Activated B cell treated with CpG ODN at 0.5 μM for 24 hours (primary cell): ENCODE measurements at regions of chr15 and their contacts with region 1.

Region 1: DNA sequence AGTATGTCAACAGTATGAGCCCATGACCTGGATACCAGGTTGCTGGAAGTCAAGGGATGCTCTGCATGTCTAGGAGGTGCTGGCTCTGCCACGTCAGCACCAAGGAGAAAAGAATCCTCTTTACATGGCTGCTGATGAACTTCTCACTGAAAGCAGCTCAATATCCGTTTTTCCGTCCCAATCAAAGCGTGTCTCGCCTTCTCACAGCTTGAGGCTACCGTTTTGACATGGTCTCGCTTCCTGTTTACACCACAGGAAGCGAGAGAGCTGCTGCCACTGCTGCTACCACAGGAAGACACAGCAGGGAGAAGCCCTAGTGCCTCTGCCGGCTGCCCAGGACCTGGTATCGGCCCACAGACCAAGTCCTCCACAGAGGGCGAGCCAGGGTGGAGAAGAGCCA is 27.3 kb downstream of the STARD5 start:
- DNase-seq: peak; percentile 56
- ATAC-seq: peak; percentile 32
- H3K4me3 Mint-ChIP-seq: peak overlapping the region; percentile 99
- H3K27ac Mint-ChIP-seq: peak overlapping the region; percentile 99
- H3K4me1 Mint-ChIP-seq: peaks cover 98% of the 10 kb centered on the region
- H3K27me3 Mint-ChIP-seq: no peaks in the 10 kb centered on the region
- CTCF ChIP-seq: no peak

Region 2: GRCh38 chr15:80953936-80954778 is 342.5 kb before region 1 on chr15:
- CTCF ChIA-PET with region 1: no interaction called
- POLR2A ChIA-PET with region 1: no interaction called
- intact Hi-C with region 1: no loop called
- DNase-seq: no peak
- ATAC-seq: no peak
- H3K4me3 Mint-ChIP-seq: no peak overlapping the region
- H3K27ac Mint-ChIP-seq: no peak overlapping the region
- H3K4me1 Mint-ChIP-seq: no peaks in the 10 kb centered on the region
- H3K27me3 Mint-ChIP-seq: no peaks in the 10 kb centered on the region
- CTCF ChIP-seq: no peak

Region 3: DNA sequence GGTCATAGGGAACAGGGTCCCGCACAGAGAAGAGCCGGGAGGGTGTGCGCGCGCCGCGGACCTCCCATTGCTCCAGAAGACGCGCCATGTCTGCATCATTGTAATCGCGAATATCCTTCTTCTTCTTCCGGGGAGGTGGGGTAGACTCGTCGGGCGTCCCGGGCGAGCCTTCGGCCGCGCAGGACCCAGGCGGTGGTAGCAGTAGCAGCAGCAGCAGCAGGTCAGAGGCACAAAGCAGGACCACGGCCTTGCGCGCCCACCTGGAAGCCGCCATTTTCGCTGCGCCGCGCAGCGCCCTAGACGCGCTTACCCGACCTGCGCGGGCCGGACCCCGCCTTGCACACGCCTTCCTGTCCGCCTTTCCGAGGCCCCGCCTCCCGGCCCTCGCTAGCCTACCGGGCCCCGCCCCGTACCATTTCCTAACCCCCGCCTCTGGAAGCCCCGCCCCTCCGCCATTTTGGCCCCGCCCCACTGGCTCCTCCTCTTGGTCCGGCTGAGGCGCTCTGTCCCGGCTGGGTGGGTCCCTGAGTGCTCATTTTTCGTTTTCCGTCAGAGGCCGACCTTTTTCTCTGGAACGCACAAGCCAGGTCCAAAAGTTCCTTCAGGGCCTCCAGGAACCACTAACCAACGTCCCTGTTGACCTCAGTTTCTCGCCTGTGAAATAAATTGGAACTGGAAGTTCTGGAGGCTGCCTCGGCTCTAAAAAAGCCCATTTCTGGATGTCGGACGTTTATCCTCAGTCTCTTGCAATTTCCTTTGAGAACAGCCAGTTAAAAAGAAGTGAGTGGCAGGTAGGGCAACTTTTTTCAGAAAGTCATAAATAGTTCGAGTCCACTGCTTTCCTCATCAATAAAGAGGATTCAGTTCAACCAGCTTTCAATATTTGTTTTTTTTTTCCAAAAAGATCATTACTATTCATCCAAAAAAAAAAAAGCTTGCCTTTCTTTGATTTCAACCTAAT is 306.9 kb before region 1 on chr15 and contains the start of gene MESD:
- CTCF ChIA-PET with region 1: no interaction called
- POLR2A ChIA-PET with region 1: interaction called, 4 read pairs
- intact Hi-C with region 1: loop called (anchors 5 kb)
- DNase-seq: peak; percentile 90
- ATAC-seq: peak; percentile 99
- H3K4me3 Mint-ChIP-seq: peak within 1 kb of the TSS; percentile 99
- H3K27ac Mint-ChIP-seq: peak within 1 kb of the TSS; percentile 99
- H3K4me1 Mint-ChIP-seq: peaks cover 54% of the 10 kb centered on the region
- H3K27me3 Mint-ChIP-seq: no peaks in the 10 kb centered on the region
- CTCF ChIP-seq: no peak
- total RNA-seq, gene MESD: 21.4 and 23.8 TPM in 2 replicates

Region 4: DNA sequence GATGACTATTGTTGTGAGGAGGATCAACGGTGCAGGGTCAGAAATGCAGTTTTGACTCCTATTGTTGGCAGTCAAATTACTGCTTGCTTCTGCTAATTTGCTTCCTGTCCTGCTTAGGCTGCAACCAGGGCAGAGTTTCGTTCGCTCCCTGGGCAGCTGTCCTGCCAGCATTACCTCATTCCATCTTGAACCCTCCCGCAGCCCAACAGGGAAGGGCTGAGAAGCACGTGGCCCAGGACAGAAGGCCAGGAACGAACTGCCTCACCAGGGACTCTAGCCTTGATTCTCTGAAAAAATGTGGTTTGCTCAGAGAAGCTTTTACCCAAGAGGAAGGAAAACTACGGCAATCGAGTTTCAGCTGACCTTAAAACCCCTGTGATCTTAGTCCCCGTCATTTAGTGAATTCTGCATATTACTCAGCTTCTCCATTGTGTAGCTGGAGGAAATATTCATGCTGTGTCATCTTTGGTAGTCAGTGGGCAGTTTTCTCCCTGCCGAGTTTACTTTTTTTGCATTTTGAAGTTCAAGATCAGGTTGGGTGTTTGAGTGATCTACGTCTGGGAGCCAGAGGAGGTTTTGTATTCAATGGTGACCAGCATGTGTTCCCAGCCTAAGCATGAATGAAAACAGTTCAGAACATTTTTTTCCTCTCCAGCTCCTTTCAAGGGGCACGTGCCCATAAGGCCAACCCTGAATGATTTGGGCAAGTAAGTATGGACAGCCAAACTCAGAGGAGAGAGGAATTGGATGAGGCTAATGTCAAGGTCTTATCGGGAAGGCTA is 273.0 kb before region 1 on chr15:
- CTCF ChIA-PET with region 1: no interaction called
- POLR2A ChIA-PET with region 1: interaction called, 4 read pairs
- intact Hi-C with region 1: loop called (anchors 1 kb)
- DNase-seq: peak; percentile 35
- ATAC-seq: peak; percentile 82
- H3K4me3 Mint-ChIP-seq: peak overlapping the region; percentile 78
- H3K27ac Mint-ChIP-seq: peak overlapping the region; percentile 91
- H3K4me1 Mint-ChIP-seq: peaks cover 18% of the 10 kb centered on the region
- H3K27me3 Mint-ChIP-seq: no peaks in the 10 kb centered on the region
- CTCF ChIP-seq: no peak

Region 5: DNA sequence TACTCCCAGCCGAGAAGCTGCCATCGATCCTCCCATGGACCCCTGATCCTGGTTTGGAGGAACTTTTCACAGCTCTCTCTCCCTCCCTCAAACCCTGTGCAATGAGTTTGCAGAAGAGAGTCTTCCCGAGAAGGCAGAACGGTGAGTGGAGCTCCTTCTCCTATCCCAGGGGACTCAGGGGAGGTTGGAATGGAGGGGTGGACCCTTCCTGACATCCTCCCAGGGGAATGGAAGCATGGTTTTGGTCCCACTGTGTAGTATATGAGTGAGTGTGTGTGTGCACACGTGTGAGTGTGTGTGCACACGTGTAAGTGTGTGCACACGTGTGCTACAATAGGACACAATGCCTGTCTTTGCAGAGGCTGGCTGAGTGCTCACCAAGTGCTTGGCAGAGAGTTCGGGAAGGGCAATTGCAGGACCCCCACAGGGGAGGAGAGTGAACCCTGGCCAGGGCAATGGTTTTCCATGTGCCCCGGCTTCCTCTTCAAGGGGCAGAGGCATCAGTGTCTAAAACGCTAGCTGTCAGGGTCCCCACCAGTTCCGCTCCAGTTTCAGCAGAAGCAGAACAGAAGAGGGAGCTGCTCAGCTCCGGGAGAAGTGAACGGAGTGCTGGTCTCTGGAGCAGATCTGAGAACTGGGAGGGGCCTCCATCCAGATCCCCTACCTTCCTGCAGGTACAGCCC is 113.8 kb before region 1 on chr15:
- CTCF ChIA-PET with region 1: no interaction called
- POLR2A ChIA-PET with region 1: no interaction called
- intact Hi-C with region 1: no loop called
- DNase-seq: no peak
- ATAC-seq: no peak
- H3K4me3 Mint-ChIP-seq: no peak overlapping the region
- H3K27ac Mint-ChIP-seq: no peak overlapping the region
- H3K4me1 Mint-ChIP-seq: no peaks in the 10 kb centered on the region
- H3K27me3 Mint-ChIP-seq: peaks cover 18% of the 10 kb centered on the region
- CTCF ChIP-seq: no peak

Region 6: GRCh38 chr15:81312790-81313543 is 16.3 kb after region 1 on chr15:
- CTCF ChIA-PET with region 1: interaction called, 17 read pairs
- POLR2A ChIA-PET with region 1: interaction called, 631 read pairs
- intact Hi-C with region 1: loop called (anchors 1 kb)
- DNase-seq: no peak
- ATAC-seq: no peak
- H3K4me3 Mint-ChIP-seq: peak overlapping the region; percentile 50
- H3K27ac Mint-ChIP-seq: peak overlapping the region; percentile 94
- H3K4me1 Mint-ChIP-seq: peaks cover 88% of the 10 kb centered on the region
- H3K27me3 Mint-ChIP-seq: no peaks in the 10 kb centered on the region
- CTCF ChIP-seq: no peak